Right cardiac atrium (tissue), 5 donors: ENCODE measurements at regions of chr7 and their contacts with region 1.

Region 1: DNA sequence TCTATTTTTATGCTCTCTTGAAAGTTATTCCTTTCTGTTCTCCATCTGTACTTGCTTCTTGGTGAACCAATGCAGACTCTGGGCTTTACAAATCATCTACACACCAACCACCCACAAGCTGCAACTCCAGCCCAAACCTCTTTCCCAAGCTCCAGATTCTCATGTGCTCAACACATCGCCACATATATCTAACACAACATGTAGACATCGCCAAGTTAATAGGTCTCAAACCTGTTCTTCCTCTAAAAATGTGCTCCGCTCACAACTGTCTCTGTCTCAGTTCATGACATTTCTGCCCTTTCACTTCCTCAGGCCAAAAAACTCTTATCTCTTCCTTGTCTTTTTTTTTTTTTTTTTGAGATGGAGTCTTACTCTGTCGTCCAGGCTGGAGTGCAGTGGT is 95.7 kb upstream of the EEPD1 start:
- DNase-seq: no peak
- ATAC-seq: no peak
- H3K4me3 ChIP-seq: no peak overlapping the region
- H3K27ac ChIP-seq: no peak overlapping the region
- H3K4me1 ChIP-seq: peaks cover 2% of the 10 kb centered on the region
- H3K27me3 ChIP-seq: no peaks in the 10 kb centered on the region

Region 2: DNA sequence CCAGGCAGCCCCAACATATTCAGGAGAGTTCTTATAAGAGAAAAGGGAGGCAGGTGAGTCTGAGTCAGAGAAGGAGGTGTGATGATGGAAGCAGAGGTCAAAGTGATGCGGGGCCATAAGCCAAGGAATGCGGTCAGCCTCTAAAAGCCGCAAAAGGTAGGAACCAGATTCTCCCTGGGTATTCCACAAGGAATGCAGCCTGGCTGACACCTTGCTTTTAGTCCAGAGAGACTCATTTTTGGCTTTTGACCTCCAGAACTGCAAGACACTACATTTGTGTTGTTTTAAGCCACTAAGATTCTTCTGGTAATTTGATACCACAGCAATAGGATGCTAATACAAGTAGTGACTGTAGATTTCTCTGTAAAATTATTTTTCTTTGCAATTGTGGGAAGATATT is 55.8 kb before region 1 on chr7:
- intact Hi-C with region 1: no loop called
- DNase-seq: no peak
- ATAC-seq: no peak
- H3K4me3 ChIP-seq: no peak overlapping the region
- H3K27ac ChIP-seq: no peak overlapping the region
- H3K4me1 ChIP-seq: peaks cover 2% of the 10 kb centered on the region
- H3K27me3 ChIP-seq: no peaks in the 10 kb centered on the region

Region 3: GRCh38 chr7:36115448-36116321 is 58.4 kb after region 1 on chr7:
- intact Hi-C with region 1: loop called in 1 of 4 experiments (anchors 10 kb)
- DNase-seq: peak; percentile 80 to 82 (median 81)
- ATAC-seq: peak; percentile 64 to 88
- H3K4me3 ChIP-seq: no peak overlapping the region
- H3K27ac ChIP-seq: peak overlapping the region; percentile 80
- H3K4me1 ChIP-seq: peaks cover 20% of the 10 kb centered on the region
- H3K27me3 ChIP-seq: no peaks in the 10 kb centered on the region

Region 4: GRCh38 chr7:37275078-37275710 is 1217.9 kb after region 1 on chr7:
- intact Hi-C with region 1: no loop called
- DNase-seq: no peak
- ATAC-seq: peak in 1 of 2 donors; percentile 47
- H3K4me3 ChIP-seq: no peak overlapping the region
- H3K27ac ChIP-seq: no peak overlapping the region
- H3K4me1 ChIP-seq: peaks cover 3% of the 10 kb centered on the region
- H3K27me3 ChIP-seq: no peaks in the 10 kb centered on the region